Naive thymus-derived CD4-positive, alpha-beta T cell (primary cell): ENCODE measurements at regions of chr9 and their contacts with region 1.

Region 1: GRCh38 chr9:137129456-137130175 is 9.3 kb upstream of the GRIN1 start:
- DNase-seq: peak; percentile 74 to 93 (median 90)
- ATAC-seq: peak; percentile 98
- H3K4me3 ChIP-seq: peak overlapping the region; percentile 85
- H3K4me3 Mint-ChIP-seq: peak overlapping the region; percentile 83 to 93 (median 90)
- H3K27ac ChIP-seq: peak overlapping the region; percentile 85
- H3K27ac Mint-ChIP-seq: peak overlapping the region; percentile 67 to 88 (median 81)
- H3K4me1 ChIP-seq: peaks cover 21 to 28% of the 10 kb centered on the region in 2 donors
- H3K4me1 Mint-ChIP-seq: peaks cover 23 to 34% (median 27%) of the 10 kb centered on the region in 7 donors
- H3K27me3 ChIP-seq: no peaks in the 10 kb centered on the region
- H3K27me3 Mint-ChIP-seq: peaks cover 9 to 10% (median 9%) of the 10 kb centered on the region in 5 donors

Region 2: DNA sequence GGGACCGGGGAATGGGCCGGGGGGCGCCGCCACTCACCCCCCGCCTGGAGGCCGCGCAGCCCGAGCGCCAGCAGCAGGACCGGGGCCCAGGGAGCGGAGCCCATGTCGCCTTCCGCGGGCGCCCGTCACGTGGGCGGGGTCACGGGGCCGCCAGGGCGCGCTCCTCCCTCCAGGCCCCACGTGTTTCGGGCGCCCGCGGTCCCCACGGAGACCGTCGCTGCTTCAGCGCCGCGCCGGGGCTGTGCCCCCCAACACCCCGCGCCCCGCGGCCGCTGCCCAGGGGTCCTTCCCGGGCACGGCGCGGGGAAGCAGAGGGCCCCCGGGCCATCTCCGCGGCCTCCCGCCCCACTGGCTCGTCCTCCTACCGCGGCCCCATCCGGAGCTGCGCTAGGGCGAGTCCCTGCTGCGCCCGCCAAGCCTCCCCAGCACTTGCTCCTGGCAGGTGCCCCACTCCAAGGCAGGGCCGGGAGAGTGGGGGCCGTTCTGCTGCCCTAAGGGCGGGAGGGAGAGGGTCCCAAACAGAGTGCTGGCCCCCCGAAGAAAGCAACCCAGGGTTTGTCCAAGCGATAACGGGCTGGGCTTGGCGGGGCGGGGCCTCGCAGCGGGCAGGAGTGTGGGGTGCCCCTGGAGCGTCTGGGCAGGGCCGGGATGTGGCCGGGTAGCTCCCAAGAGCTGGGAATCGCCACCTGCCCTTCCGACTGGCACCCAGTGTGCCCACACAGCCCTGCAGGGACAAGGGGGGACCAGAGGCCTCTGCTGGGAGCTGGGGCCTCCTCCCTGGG is 14.8 kb before region 1 on chr9 and contains the start of gene DPP7:
- CTCF ChIA-PET with region 1: interaction called, 4 read pairs
- POLR2A ChIA-PET with region 1: interaction called, 9 read pairs
- intact Hi-C with region 1: loop called (anchors 1 to 2 kb)
- DNase-seq: peak; percentile 63 to 88 (median 80)
- ATAC-seq: peak; percentile 93
- H3K4me3 ChIP-seq: peak within 1 kb of the TSS; percentile 54
- H3K4me3 Mint-ChIP-seq: peak within 1 kb of the TSS; percentile 38 to 82 (median 69)
- H3K27ac ChIP-seq: peak within 1 kb of the TSS; percentile 81
- H3K27ac Mint-ChIP-seq: peak within 1 kb of the TSS in 4 of 9 donors; percentile 24 to 78 (median 40)
- H3K4me1 ChIP-seq: peaks cover 0 to 4% of the 10 kb centered on the region in 2 donors
- H3K4me1 Mint-ChIP-seq: peaks cover 0 to 13% (median 6%) of the 10 kb centered on the region in 7 donors
- H3K27me3 ChIP-seq: no peaks in the 10 kb centered on the region
- H3K27me3 Mint-ChIP-seq: no peaks in the 10 kb centered on the region
- total RNA-seq, gene DPP7: 235 to 328 (median 298) TPM

Region 3: DNA sequence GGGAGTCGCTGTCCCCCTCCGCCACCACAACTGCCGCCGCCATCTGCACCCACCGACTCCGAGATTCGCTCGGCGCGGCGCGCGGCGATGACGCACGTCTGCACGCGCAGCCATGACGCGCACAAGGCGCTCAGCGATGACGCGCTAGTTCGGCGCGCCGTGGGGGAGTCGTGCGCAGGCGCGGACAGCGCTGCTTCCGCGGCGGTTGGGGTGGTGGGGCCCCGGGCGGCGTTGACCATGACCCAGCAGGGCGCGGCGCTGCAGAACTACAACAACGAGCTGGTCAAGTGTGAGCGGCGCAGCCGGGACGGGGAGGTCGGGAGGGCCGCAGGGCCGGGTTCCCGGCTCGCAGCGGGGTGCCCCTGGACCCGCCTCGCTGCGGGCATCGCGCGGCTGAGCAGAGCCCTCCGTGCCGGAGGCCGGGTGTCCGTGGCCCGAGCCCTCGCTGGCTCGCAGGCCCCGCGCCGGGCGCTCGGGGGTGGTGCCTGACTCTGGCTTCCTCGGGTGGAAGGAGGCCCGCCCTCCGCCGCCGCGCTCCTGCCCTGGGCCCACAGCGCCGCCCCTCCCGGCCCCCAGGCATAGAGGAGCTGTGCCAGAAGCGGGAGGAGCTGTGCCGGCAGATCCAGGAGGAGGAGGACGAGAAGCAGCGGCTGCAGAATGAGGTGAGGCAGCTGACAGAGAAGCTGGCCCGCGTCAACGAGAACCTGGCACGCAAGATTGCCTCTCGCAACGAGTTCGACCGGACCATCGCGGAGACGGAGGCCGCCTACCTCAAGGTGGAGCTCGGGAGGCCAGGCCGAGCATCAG is 59.1 kb after region 1 on chr9 and contains the starts of genes ANAPC2 and SSNA1:
- CTCF ChIA-PET with region 1: interaction called, 5 read pairs
- POLR2A ChIA-PET with region 1: interaction called, 10 read pairs
- intact Hi-C with region 1: loop called (anchors 1 kb)
- DNase-seq: peak; percentile 86 to 99 (median 93)
- ATAC-seq: peak; percentile 91
- H3K4me3 ChIP-seq: peak within 1 kb of the TSS; percentile 98
- H3K4me3 Mint-ChIP-seq: peak within 1 kb of the TSS; percentile 91 to 99 (median 92)
- H3K27ac ChIP-seq: peak within 1 kb of the TSS; percentile 99
- H3K27ac Mint-ChIP-seq: peak within 1 kb of the TSS; percentile 85 to 96 (median 93)
- H3K4me1 ChIP-seq: peaks cover 30 to 32% of the 10 kb centered on the region in 2 donors
- H3K4me1 Mint-ChIP-seq: peaks cover 14 to 61% (median 32%) of the 10 kb centered on the region in 7 donors
- H3K27me3 ChIP-seq: no peaks in the 10 kb centered on the region
- H3K27me3 Mint-ChIP-seq: no peaks in the 10 kb centered on the region
- total RNA-seq, gene ANAPC2: 77.3 to 147 (median 134) TPM
- total RNA-seq, gene SSNA1: 37.9 to 75.6 (median 46.8) TPM